ENCODE measurements at regions of chr18 and their contacts with region 1.

Region 1: DNA sequence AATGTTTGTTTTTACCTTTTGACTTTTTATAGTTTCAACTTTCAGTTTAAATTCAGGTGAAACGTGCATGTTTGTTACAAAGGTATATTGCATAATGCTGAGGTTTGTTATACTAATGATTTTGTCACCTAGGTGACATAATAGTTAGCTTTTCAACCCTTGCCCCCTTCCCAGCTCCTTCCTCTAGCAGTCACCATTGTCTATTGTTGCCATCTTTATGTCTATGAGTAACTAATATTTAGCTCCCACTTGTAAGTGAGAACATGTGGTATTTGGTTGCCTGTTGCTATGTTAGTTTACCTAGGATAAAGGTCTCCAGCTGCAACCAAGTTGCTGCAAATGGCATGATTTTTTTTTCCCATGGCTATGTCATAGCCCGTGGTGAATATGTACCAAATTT is 322.3 kb upstream of the SETBP1 start:
- DNase-seq: no peak
- H3K4me3 ChIP-seq: no peak overlapping the region
- H3K27ac ChIP-seq: no peak overlapping the region
- H3K4me1 ChIP-seq: no peaks in the 10 kb centered on the region
- H3K27me3 ChIP-seq: no peaks in the 10 kb centered on the region
- CTCF ChIP-seq: no peak
- POLR2A ChIP-seq: no peak

Region 2: DNA sequence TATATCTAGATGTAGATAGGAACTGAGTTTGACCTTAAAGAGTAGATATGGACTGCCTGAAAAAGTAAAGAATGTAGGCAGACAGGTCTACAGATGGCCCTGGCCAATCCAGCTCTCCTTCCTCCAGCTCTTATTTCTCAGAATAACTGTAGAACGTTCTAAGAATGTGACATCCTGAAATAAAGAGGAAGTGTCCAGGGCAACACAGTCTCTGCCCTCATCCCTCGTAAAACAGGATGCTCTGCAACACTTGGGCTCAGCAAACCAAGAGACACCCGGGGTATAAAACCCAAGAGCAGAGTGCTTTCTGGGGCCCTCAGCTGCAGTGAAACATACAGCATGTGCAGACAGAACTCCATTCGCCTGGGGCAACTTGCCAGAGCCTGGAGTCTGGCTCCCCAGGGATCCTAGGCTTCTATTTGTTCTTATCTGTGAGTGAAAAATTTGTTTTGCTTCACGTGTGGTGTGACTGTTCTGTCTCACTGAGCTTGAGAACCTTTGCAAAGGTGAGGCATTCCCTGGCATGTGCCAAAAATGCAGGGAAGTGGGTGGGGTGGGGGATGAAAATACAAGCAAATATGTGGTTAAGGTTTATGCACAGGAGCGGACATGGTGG is 723.3 kb after region 1 on chr18:
- intact Hi-C with region 1: loop called (anchors 5 kb)
- DNase-seq: no peak
- H3K4me3 ChIP-seq: no peak overlapping the region
- H3K27ac ChIP-seq: no peak overlapping the region
- H3K4me1 ChIP-seq: no peaks in the 10 kb centered on the region
- H3K27me3 ChIP-seq: no peaks in the 10 kb centered on the region
- CTCF ChIP-seq: no peak
- POLR2A ChIP-seq: no peak

Measured in breast epithelium (tissue), 4 donors.